Mammary epithelial cell (primary cell): ENCODE measurements at regions of chr10 and their contacts with region 1.

Region 1: GRCh38 chr10:121380211-121380610 is 218.0 kb downstream of the FGFR2 start:
- DNase-seq: no peak
- H3K4me3 ChIP-seq: no peak overlapping the region
- H3K27ac ChIP-seq: no peak overlapping the region
- H3K4me1 ChIP-seq: no peaks in the 10 kb centered on the region
- H3K27me3 ChIP-seq: no peaks in the 10 kb centered on the region
- CTCF ChIP-seq: no peak

Region 2: DNA sequence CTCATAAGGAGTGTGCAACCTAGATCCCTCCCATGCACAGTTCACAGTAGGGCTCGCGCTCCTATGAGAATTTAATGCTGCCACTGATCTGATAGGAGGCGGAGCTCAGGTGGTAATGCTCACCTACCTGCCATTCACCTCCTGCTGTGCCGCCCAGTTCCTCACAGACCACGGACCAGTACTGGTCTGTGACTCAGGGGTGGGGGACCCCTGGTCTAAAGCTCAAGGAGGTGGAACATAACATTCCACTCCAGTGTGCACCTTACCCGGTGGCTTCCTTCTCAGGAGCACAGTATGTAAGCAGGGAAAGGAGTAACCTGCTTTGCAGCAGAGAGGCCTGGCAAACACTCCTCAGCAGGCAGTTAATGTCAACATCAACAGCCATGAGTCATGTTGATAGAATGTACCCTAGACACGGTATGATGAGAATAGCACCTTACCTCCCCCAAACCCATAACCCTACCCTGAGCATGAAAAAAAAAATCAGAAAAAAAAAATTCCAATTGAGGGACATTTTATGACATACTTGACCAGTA is 55.5 kb before region 1 on chr10:
- CTCF ChIA-PET with region 1: no interaction called
- dilution Hi-C with region 1: loop called (anchors 5 kb)
- in situ Hi-C with region 1: no loop called
- intact Hi-C with region 1: no loop called
- DNase-seq: peak; percentile 70
- H3K4me3 ChIP-seq: no peak overlapping the region
- H3K27ac ChIP-seq: peak overlapping the region; percentile 81
- H3K4me1 ChIP-seq: peaks cover 50% of the 10 kb centered on the region
- H3K27me3 ChIP-seq: no peaks in the 10 kb centered on the region
- CTCF ChIP-seq: no peak